Activated CD4-positive, alpha-beta T cell treated with anti-CD3 and anti-CD28 coated beads for 36 hours (primary cell): ENCODE measurements at regions of chr11 and their contacts with region 1.

Region 1: GRCh38 chr11:35822815-35823495 is 120.9 kb upstream of the LDLRAD3 start:
- DNase-seq: no peak
- ATAC-seq: no peak
- H3K4me3 Mint-ChIP-seq: no peak overlapping the region
- H3K27ac Mint-ChIP-seq: no peak overlapping the region
- H3K4me1 Mint-ChIP-seq: peaks cover 12% of the 10 kb centered on the region
- H3K27me3 Mint-ChIP-seq: no peaks in the 10 kb centered on the region

Region 2: GRCh38 chr11:35792148-35792845 is 30.7 kb before region 1 on chr11:
- CTCF ChIA-PET with region 1: interaction called, 13 read pairs
- POLR2A ChIA-PET with region 1: no interaction called
- intact Hi-C with region 1: no loop called
- DNase-seq: no peak
- ATAC-seq: no peak
- H3K4me3 Mint-ChIP-seq: no peak overlapping the region
- H3K27ac Mint-ChIP-seq: no peak overlapping the region
- H3K4me1 Mint-ChIP-seq: peaks cover 18% of the 10 kb centered on the region
- H3K27me3 Mint-ChIP-seq: no peaks in the 10 kb centered on the region

Region 3: DNA sequence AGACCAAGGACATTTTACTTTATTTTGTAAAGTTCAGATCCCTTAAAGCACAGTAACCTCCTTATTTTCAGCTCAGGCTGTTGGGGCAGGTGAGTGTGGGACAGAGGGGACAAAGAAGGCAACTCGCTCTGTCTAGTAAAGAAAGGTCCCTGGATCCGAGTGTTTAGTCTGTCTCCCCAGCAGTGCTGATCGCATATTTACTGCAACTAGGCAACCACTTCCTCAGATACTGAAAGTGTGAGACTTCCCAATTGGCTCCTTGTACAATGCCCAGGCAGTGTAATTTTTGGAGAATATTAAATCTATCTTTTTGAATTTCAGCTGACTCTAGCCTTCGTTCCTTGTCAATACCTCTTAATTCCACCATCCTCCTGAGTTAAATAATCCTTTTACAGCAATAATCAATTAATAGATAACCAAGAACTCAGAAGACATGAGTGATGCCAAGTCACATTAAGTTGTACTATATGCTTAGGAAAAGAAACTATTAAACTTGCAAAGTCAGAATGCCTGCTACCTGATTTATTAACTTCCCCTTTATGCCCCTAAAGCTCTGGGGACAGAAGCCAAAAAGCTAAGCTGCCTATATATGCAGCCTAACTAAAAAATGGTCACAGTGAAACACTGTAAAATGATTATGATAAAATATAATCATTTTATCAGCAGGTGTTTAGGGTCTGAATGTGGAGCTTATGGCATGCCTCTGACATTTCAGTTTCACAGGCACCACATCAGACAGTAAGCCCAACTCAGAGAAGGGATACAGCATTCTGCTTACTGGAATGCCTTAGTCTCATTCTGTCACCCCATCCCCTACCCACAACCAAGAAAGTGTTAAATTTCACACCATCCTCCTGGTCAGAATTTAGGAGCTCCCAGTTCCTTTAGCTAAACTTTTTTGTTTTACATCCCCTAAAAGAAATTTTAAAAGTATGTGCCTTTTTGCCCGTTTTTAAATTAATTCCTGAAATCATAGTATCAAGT is 21.7 kb before region 1 on chr11:
- CTCF ChIA-PET with region 1: interaction called, 20 read pairs
- POLR2A ChIA-PET with region 1: no interaction called
- intact Hi-C with region 1: no loop called
- DNase-seq: no peak
- ATAC-seq: no peak
- H3K4me3 Mint-ChIP-seq: no peak overlapping the region
- H3K27ac Mint-ChIP-seq: peak overlapping the region; percentile 12
- H3K4me1 Mint-ChIP-seq: peaks cover 17% of the 10 kb centered on the region
- H3K27me3 Mint-ChIP-seq: no peaks in the 10 kb centered on the region

Region 4: DNA sequence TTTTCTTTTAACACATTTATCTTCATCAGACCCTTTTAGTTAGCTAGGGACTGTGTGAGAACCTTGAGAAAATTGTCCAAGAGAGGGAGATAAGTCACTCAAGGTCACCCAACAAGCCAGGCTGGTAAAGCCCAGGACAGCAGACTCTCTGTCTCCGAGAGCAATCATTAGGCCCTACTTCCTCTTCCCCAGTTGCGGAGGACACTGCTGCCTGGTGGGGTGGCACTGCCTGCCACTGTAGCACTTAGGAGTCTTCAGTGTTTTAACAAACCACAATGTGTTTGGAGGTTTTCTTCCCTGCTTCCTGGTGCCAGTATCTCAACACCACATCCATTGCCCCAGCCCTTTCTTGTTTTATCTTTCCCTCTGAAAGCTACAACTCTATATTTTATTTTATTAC is 11.2 kb before region 1 on chr11:
- CTCF ChIA-PET with region 1: interaction called, 35 read pairs
- POLR2A ChIA-PET with region 1: no interaction called
- intact Hi-C with region 1: no loop called
- DNase-seq: no peak
- ATAC-seq: no peak
- H3K4me3 Mint-ChIP-seq: no peak overlapping the region
- H3K27ac Mint-ChIP-seq: no peak overlapping the region
- H3K4me1 Mint-ChIP-seq: no peaks in the 10 kb centered on the region
- H3K27me3 Mint-ChIP-seq: no peaks in the 10 kb centered on the region

Region 5: DNA sequence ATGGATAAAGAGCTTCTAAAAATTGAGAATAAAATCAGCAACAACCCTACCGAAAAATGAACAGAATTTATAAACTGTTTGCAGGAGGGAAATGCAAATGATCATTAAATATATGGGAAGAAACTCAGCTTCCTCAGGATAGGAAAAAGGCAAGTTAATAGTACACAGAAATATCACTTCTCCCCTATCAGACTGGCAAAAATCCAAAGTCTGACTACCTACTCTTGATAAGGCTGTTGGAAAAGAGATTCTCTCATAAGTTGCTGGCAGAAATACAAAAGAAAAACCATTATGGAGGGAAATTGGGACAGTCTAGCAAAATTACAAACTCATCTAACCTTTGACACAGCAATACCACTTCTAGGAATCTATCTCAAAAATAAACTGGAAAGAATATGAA is 20.0 kb after region 1 on chr11:
- CTCF ChIA-PET with region 1: interaction called, 17 read pairs
- POLR2A ChIA-PET with region 1: no interaction called
- intact Hi-C with region 1: no loop called
- DNase-seq: no peak
- ATAC-seq: no peak
- H3K4me3 Mint-ChIP-seq: no peak overlapping the region
- H3K27ac Mint-ChIP-seq: no peak overlapping the region
- H3K4me1 Mint-ChIP-seq: no peaks in the 10 kb centered on the region
- H3K27me3 Mint-ChIP-seq: peaks cover 14% of the 10 kb centered on the region

Region 6: GRCh38 chr11:36041988-36042611 is 219.1 kb after region 1 on chr11:
- CTCF ChIA-PET with region 1: no interaction called
- POLR2A ChIA-PET with region 1: no interaction called
- intact Hi-C with region 1: no loop called
- DNase-seq: no peak
- ATAC-seq: no peak
- H3K4me3 Mint-ChIP-seq: no peak overlapping the region
- H3K27ac Mint-ChIP-seq: no peak overlapping the region
- H3K4me1 Mint-ChIP-seq: no peaks in the 10 kb centered on the region
- H3K27me3 Mint-ChIP-seq: peaks cover 10% of the 10 kb centered on the region

Region 7: GRCh38 chr11:36131721-36132397 is 308.9 kb after region 1 on chr11:
- CTCF ChIA-PET with region 1: interaction called, 5 read pairs
- POLR2A ChIA-PET with region 1: no interaction called
- intact Hi-C with region 1: loop called in 1 of 2 experiments (anchors 10 kb)
- DNase-seq: peak; percentile 17
- ATAC-seq: no peak
- H3K4me3 Mint-ChIP-seq: no peak overlapping the region
- H3K27ac Mint-ChIP-seq: no peak overlapping the region
- H3K4me1 Mint-ChIP-seq: no peaks in the 10 kb centered on the region
- H3K27me3 Mint-ChIP-seq: peaks cover 8% of the 10 kb centered on the region